ENCODE measurements at regions of chr18 and their contacts with region 1.

Region 1: GRCh38 chr18:79951578-79952455 is at the start of gene SLC66A2:
- DNase-seq: peak; percentile 97
- ATAC-seq: peak; percentile 87
- H3K4me3 Mint-ChIP-seq: peak within 1 kb of the TSS; percentile 82
- H3K27ac Mint-ChIP-seq: peak within 1 kb of the TSS; percentile 81
- H3K4me1 Mint-ChIP-seq: peaks cover 39% of the 10 kb centered on the region
- H3K27me3 Mint-ChIP-seq: no peaks in the 10 kb centered on the region
- total RNA-seq, gene SLC66A2: 23.4 to 28.5 TPM

Region 2: DNA sequence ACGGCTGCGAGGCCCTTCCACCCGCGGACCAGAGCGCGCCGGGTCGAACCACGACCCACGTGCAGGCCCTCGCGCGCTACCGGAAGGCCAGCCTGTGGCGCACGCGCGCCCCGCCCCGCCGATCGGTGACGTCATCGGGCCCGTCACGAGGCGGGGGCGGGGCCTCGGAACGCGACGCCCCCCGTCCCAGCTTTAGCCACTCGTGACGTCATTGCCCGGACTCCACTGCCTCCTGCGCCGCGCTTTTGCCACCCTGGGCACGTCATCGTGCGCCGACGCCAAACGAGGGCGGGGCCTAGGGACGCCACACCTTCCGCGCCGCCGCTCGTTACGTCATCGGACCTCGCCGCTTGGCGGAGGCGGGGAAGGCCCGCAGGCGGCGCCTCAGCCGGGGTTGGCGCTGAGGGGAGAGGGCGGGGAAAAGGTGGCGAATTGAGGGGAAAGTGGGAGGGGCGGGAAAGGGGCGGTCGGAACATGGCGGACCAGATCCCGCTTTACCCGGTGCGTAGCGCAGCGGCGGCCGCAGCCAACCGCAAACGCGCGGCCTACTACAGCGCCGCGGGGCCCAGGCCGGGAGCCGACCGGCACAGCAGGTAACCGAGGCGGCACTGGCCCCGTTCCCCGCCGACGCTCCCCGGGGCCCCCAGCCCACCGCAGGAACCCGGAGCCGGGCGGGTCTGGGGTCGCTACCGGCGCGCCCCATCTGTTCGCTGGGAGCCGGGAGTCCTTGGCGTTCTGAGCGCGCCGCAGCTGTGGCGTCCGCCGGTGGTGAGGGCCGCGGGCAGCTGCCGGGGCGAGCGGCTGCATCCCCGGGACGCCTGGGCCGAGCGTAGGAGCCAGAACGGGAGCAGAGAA is 882.7 kb before region 1 on chr18 and contains the start of gene ATP9B:
- CTCF ChIA-PET with region 1: no interaction called
- POLR2A ChIA-PET with region 1: no interaction called
- intact Hi-C with region 1: loop called in 1 of 2 experiments (anchors 5 kb)
- DNase-seq: peak; percentile 99
- ATAC-seq: peak; percentile 83
- H3K4me3 Mint-ChIP-seq: peak within 1 kb of the TSS; percentile 87
- H3K27ac Mint-ChIP-seq: peak within 1 kb of the TSS; percentile 99
- H3K4me1 Mint-ChIP-seq: peaks cover 38% of the 10 kb centered on the region
- H3K27me3 Mint-ChIP-seq: peaks cover 11% of the 10 kb centered on the region
- total RNA-seq, gene ATP9B: 19.4 to 20.8 TPM

Region 3: GRCh38 chr18:79400091-79400590 is 551.7 kb before region 1 on chr18:
- CTCF ChIA-PET with region 1: no interaction called
- POLR2A ChIA-PET with region 1: no interaction called
- intact Hi-C with region 1: loop called in 1 of 2 experiments (anchors 5 kb)
- DNase-seq: peak; percentile 86
- ATAC-seq: no peak
- H3K4me3 Mint-ChIP-seq: peak overlapping the region; percentile 83
- H3K27ac Mint-ChIP-seq: no peak overlapping the region
- H3K4me1 Mint-ChIP-seq: peaks cover 45% of the 10 kb centered on the region
- H3K27me3 Mint-ChIP-seq: no peaks in the 10 kb centered on the region

Region 4: GRCh38 chr18:79679111-79679872 is 272.5 kb before region 1 on chr18 and contains the start of gene CTDP1:
- CTCF ChIA-PET with region 1: no interaction called
- POLR2A ChIA-PET with region 1: no interaction called
- intact Hi-C with region 1: loop called in 1 of 2 experiments (anchors 1 kb)
- DNase-seq: peak; percentile 99
- ATAC-seq: peak; percentile 91
- H3K4me3 Mint-ChIP-seq: peak within 1 kb of the TSS; percentile 90
- H3K27ac Mint-ChIP-seq: peak within 1 kb of the TSS; percentile 97
- H3K4me1 Mint-ChIP-seq: peaks cover 65% of the 10 kb centered on the region
- H3K27me3 Mint-ChIP-seq: no peaks in the 10 kb centered on the region
- total RNA-seq, gene CTDP1: 36.7 to 45.5 TPM

Region 5: DNA sequence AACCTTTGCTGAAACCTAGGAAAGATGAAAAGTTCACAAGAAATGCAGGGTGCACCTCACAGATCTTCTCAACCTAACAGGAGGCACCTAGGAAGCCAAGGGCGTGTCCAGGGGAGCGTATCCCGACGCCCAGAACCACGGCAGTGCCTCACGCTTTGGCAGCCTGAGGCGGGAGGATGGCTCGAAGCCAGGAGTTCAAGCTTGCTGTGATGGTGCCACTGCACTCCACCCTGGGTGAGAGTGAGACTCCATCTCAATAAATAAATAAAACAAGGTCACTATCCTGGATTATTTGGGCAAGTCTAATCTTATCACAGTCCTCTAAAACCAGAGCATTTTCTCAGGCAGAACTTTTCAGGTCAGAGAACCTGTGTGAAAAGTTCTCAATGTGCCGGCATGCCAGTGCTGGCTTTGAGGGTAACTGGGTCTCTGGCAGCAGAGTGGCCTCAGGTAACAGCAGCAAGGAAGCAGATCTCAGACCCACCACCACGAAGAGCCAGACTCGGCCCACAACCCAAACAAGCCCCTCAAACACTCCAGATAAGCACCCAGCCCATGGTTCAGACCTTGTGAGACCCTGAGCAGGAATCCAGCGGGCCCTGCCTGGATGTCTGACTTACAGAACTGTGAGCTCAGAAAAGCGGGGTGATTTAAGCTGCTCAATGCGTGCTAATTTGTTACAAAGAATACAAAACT is 24.3 kb after region 1 on chr18:
- CTCF ChIA-PET with region 1: no interaction called
- POLR2A ChIA-PET with region 1: no interaction called
- intact Hi-C with region 1: no loop called
- DNase-seq: no peak
- ATAC-seq: no peak
- H3K4me3 Mint-ChIP-seq: no peak overlapping the region
- H3K27ac Mint-ChIP-seq: peak overlapping the region; percentile 2
- H3K4me1 Mint-ChIP-seq: peaks cover 20% of the 10 kb centered on the region
- H3K27me3 Mint-ChIP-seq: no peaks in the 10 kb centered on the region

Measured in activated CD4-positive, alpha-beta T cell treated with anti-CD3 and anti-CD28 coated beads for 36 hours (primary cell).